Common myeloid progenitor, CD34-positive (primary cell): ENCODE measurements at regions of chr10 and their contacts with region 1.

Region 1: DNA sequence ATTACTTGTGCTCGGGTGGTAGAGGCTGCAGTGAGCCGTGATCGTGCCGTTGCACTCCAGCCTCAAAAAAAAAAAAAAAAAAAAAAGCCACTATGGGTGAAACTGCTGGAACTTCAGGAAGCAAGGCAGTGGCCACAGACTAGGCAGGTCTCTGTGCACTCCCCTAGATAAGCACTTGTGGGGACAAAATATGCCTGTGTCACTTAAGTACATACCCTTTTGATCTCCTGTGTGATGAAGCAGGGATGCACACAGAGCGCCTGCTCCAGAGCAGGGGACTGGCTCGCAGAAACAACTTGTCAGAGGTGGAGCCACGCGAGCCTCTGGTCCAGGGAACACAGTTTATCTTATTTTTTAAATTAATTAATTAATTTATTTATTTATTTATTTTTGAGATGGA is 42.9 kb upstream of the PSAP start:
- DNase-seq: peak; percentile 67 to 91 (median 84)
- H3K4me3 ChIP-seq: peak overlapping the region in 1 of 7 experiments; percentile 28
- H3K27ac ChIP-seq: no peak overlapping the region
- H3K4me1 ChIP-seq: peaks cover 6 to 28% (median 18%) of the 10 kb centered on the region in 4 experiments
- H3K27me3 ChIP-seq: no peaks in the 10 kb centered on the region

Region 2: DNA sequence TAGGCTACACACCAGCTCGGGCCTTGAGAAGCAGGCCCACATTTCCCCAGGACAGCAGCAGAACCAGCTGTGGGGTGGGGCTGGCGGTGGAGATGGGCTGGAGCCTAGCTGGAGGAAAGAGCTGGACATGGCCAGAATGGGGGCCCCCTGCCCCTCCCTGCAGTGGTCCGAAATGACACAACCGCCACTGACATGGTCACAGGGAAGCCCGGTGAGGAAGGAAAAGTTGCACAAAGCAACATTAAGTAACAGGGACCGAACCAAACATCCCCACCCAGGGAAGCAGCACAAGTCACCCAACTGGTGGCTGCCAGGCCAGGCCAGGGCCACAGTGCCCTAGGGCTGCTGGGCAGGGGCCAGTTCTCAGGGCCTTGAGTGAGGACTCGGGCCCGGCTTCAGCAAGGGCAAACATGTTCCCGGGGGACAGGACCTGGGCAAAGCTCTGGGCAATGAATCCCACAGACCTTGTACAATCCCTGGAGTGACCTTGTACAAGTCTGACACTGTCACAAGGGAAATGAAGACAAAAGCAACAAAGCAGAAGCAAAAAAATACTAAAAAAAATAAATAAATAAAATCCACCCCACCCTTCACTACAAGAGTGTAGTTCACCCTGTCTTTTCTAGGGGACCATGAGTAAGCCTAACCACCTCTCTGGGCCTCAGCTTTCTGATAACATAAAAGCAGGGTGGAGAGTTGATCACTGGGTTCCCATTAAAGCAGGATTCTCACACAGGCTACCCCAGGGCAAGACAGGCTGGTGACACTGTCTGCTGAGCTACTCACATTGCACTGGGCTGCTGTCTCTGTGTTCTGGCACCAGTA is 75.9 kb before region 1 on chr10:
- CTCF ChIA-PET with region 1: interaction called, 10 read pairs
- POLR2A ChIA-PET with region 1: no interaction called
- DNase-seq: no peak
- H3K4me3 ChIP-seq: no peak overlapping the region
- H3K27ac ChIP-seq: no peak overlapping the region
- H3K4me1 ChIP-seq: peaks cover 0 to 10% (median 0%) of the 10 kb centered on the region in 4 experiments
- H3K27me3 ChIP-seq: no peaks in the 10 kb centered on the region

Region 3: GRCh38 chr10:71850637-71851464 is 43.1 kb before region 1 on chr10 and contains the start of gene PSAP:
- CTCF ChIA-PET with region 1: interaction called, 14 read pairs
- POLR2A ChIA-PET with region 1: interaction called, 6 read pairs
- DNase-seq: peak; percentile 96 to 97 (median 96)
- H3K4me3 ChIP-seq: peak within 1 kb of the TSS; percentile 78 to 97 (median 90)
- H3K27ac ChIP-seq: peak within 1 kb of the TSS; percentile 40 to 87
- H3K4me1 ChIP-seq: peaks cover 9 to 39% (median 28%) of the 10 kb centered on the region in 4 experiments
- H3K27me3 ChIP-seq: no peaks in the 10 kb centered on the region

Region 4: GRCh38 chr10:71878327-71879034 is 15.4 kb before region 1 on chr10:
- CTCF ChIA-PET with region 1: interaction called, 23 read pairs
- POLR2A ChIA-PET with region 1: no interaction called
- DNase-seq: peak; percentile 44 to 82 (median 78)
- H3K4me3 ChIP-seq: peak overlapping the region in 3 of 7 experiments; percentile 4 to 33 (median 7)
- H3K27ac ChIP-seq: peak overlapping the region in 1 of 2 experiments; percentile 66
- H3K4me1 ChIP-seq: peaks cover 8 to 23% (median 12%) of the 10 kb centered on the region in 4 experiments
- H3K27me3 ChIP-seq: no peaks in the 10 kb centered on the region

Region 5: GRCh38 chr10:71909399-71910083 is 15.6 kb after region 1 on chr10:
- CTCF ChIA-PET with region 1: interaction called, 17 read pairs
- POLR2A ChIA-PET with region 1: no interaction called
- DNase-seq: peak in 2 of 3 donors; percentile 38 to 60
- H3K4me3 ChIP-seq: no peak overlapping the region
- H3K27ac ChIP-seq: no peak overlapping the region
- H3K4me1 ChIP-seq: peaks cover 0 to 6% (median 2%) of the 10 kb centered on the region in 4 experiments
- H3K27me3 ChIP-seq: no peaks in the 10 kb centered on the region